ENCODE measurements at regions of chr6 and their contacts with region 1.

Region 1: DNA sequence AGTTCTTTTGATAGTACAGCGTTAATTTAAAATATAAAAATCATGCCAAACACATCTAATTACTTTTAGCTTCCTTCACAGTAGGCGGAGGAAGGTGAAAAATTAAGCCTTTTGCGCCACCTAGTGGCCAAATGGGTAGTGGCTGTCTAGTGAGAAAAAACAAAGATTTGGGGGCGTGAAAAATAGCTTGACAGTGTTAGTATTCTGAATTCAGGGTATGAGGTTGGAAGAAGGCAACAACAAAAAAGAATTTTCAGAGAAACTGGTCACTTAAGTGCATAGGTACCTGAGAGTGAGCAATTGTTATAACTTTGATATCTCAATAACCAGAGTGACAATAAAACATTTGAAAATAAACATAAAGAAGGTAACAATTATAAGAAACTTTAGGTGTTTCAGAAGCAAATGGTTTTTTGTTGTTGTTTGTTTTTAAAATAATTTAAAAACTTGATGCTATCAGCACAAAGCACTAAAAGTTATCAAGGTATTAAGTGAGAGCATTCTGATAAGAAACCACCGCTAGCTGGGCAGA is 14.3 kb downstream of the PSMB9 start:
- DNase-seq: peak; percentile 76 to 94 (median 87)
- ATAC-seq: peak; percentile 81
- H3K4me3 ChIP-seq: no peak overlapping the region
- H3K4me3 Mint-ChIP-seq: no peak overlapping the region
- H3K27ac ChIP-seq: no peak overlapping the region
- H3K27ac Mint-ChIP-seq: peak overlapping the region; percentile 82
- H3K4me1 ChIP-seq: peaks cover 20% of the 10 kb centered on the region
- H3K4me1 Mint-ChIP-seq: peaks cover 35% of the 10 kb centered on the region
- H3K27me3 ChIP-seq: no peaks in the 10 kb centered on the region
- H3K27me3 Mint-ChIP-seq: no peaks in the 10 kb centered on the region
- CTCF ChIP-seq: peak; percentile 95

Region 2: GRCh38 chr6:32413427-32414047 is 454.8 kb before region 1 on chr6:
- CTCF ChIA-PET with region 1: interaction called, 13 read pairs
- POLR2A ChIA-PET with region 1: no interaction called
- intact Hi-C with region 1: loop called (anchors 1 to 2 kb)
- DNase-seq: peak; percentile 76 to 91 (median 83)
- ATAC-seq: peak; percentile 87
- H3K4me3 ChIP-seq: no peak overlapping the region
- H3K4me3 Mint-ChIP-seq: no peak overlapping the region
- H3K27ac ChIP-seq: no peak overlapping the region
- H3K27ac Mint-ChIP-seq: no peak overlapping the region
- H3K4me1 ChIP-seq: peaks cover 5% of the 10 kb centered on the region
- H3K4me1 Mint-ChIP-seq: peaks cover 11% of the 10 kb centered on the region
- H3K27me3 ChIP-seq: peaks cover 8 to 17% of the 10 kb centered on the region in 2 experiments
- H3K27me3 Mint-ChIP-seq: peaks cover 56% of the 10 kb centered on the region
- CTCF ChIP-seq: peak; percentile 97

Region 3: GRCh38 chr6:32622545-32623401 is 245.6 kb before region 1 on chr6:
- CTCF ChIA-PET with region 1: no interaction called
- POLR2A ChIA-PET with region 1: interaction called, 3 read pairs
- intact Hi-C with region 1: loop called in 1 of 2 experiments (anchors 5 kb)
- DNase-seq: peak in 11 of 14 experiments; percentile 8 to 94 (median 24)
- ATAC-seq: peak; percentile 77
- H3K4me3 ChIP-seq: no peak overlapping the region
- H3K4me3 Mint-ChIP-seq: peak overlapping the region; percentile 13
- H3K27ac ChIP-seq: peak overlapping the region; percentile 49 to 73
- H3K27ac Mint-ChIP-seq: peak overlapping the region; percentile 91
- H3K4me1 ChIP-seq: peaks cover 23% of the 10 kb centered on the region
- H3K4me1 Mint-ChIP-seq: peaks cover 57% of the 10 kb centered on the region
- H3K27me3 ChIP-seq: no peaks in the 10 kb centered on the region
- H3K27me3 Mint-ChIP-seq: no peaks in the 10 kb centered on the region
- CTCF ChIP-seq: peak; percentile 45

Region 4: GRCh38 chr6:32796848-32797776 is 71.2 kb before region 1 on chr6:
- CTCF ChIA-PET with region 1: interaction called, 6 read pairs
- POLR2A ChIA-PET with region 1: no interaction called
- intact Hi-C with region 1: loop called in 1 of 2 experiments (anchors 5 kb)
- DNase-seq: peak; percentile 57 to 88 (median 76)
- ATAC-seq: peak; percentile 73
- H3K4me3 ChIP-seq: peak overlapping the region; percentile 14
- H3K4me3 Mint-ChIP-seq: peak overlapping the region; percentile 40
- H3K27ac ChIP-seq: no peak overlapping the region
- H3K27ac Mint-ChIP-seq: no peak overlapping the region
- H3K4me1 ChIP-seq: peaks cover 9% of the 10 kb centered on the region
- H3K4me1 Mint-ChIP-seq: peaks cover 26% of the 10 kb centered on the region
- H3K27me3 ChIP-seq: peaks cover 14 to 21% of the 10 kb centered on the region in 2 experiments
- H3K27me3 Mint-ChIP-seq: peaks cover 65% of the 10 kb centered on the region
- CTCF ChIP-seq: peak; percentile 97

Region 5: GRCh38 chr6:32838114-32838958 is 30.0 kb before region 1 on chr6 and contains the start of gene TAP2:
- CTCF ChIA-PET with region 1: interaction called, 186 read pairs
- POLR2A ChIA-PET with region 1: interaction called, 282 read pairs
- intact Hi-C with region 1: loop called (anchors 1 kb)
- DNase-seq: peak; percentile 93 to 99 (median 98)
- ATAC-seq: peak; percentile 86
- H3K4me3 ChIP-seq: peak within 1 kb of the TSS; percentile 77
- H3K4me3 Mint-ChIP-seq: peak within 1 kb of the TSS; percentile 97
- H3K27ac ChIP-seq: peak within 1 kb of the TSS; percentile 76 to 87
- H3K27ac Mint-ChIP-seq: peak within 1 kb of the TSS; percentile 99
- H3K4me1 ChIP-seq: peaks cover 67% of the 10 kb centered on the region
- H3K4me1 Mint-ChIP-seq: peaks cover 94% of the 10 kb centered on the region
- H3K27me3 ChIP-seq: no peaks in the 10 kb centered on the region
- H3K27me3 Mint-ChIP-seq: no peaks in the 10 kb centered on the region
- CTCF ChIP-seq: peak; percentile 93
- total RNA-seq, gene TAP2: 165 to 171 TPM

Region 6: GRCh38 chr6:32853541-32854375 is 14.6 kb before region 1 on chr6 and contains the starts of genes PSMB9 and TAP1:
- CTCF ChIA-PET with region 1: interaction called, 67 read pairs
- POLR2A ChIA-PET with region 1: interaction called, 118 read pairs
- intact Hi-C with region 1: loop called (anchors 1 kb)
- DNase-seq: peak; percentile 88 to 98 (median 94)
- ATAC-seq: peak; percentile 81
- H3K4me3 ChIP-seq: peak within 1 kb of the TSS; percentile 94
- H3K4me3 Mint-ChIP-seq: peak within 1 kb of the TSS; percentile 98
- H3K27ac ChIP-seq: peak within 1 kb of the TSS; percentile 98 to 100
- H3K27ac Mint-ChIP-seq: peak within 1 kb of the TSS; percentile 99
- H3K4me1 ChIP-seq: peaks cover 77% of the 10 kb centered on the region
- H3K4me1 Mint-ChIP-seq: peaks cover 86% of the 10 kb centered on the region
- H3K27me3 ChIP-seq: no peaks in the 10 kb centered on the region
- H3K27me3 Mint-ChIP-seq: no peaks in the 10 kb centered on the region
- CTCF ChIP-seq: peak; percentile 97
- total RNA-seq, gene PSMB9: 37.2 to 38.4 TPM
- total RNA-seq, gene TAP1: 91.5 to 93.9 TPM

Measured in CD4-positive, alpha-beta T cell (primary cell).